ENCODE measurements at regions of chr6 and their contacts with region 1.

Region 1: GRCh38 chr6:125153391-125154117 is at the start of gene TPD52L1:
- DNase-seq: peak; percentile 89 to 93 (median 91)
- ATAC-seq: peak; percentile 94
- H3K4me3 ChIP-seq: peak within 1 kb of the TSS; percentile 59 to 64
- H3K27ac ChIP-seq: peak within 1 kb of the TSS; percentile 63 to 80 (median 72)
- H3K4me1 ChIP-seq: peaks cover 15% of the 10 kb centered on the region
- H3K27me3 ChIP-seq: no peaks in the 10 kb centered on the region
- CTCF ChIP-seq: peak; percentile 79 to 95 (median 91)
- POLR2A ChIP-seq: peak; percentile 66 to 79 (median 72)
- total RNA-seq, gene TPD52L1: 33.3 to 101 TPM

Region 2: GRCh38 chr6:124995131-124995530 is 158.4 kb before region 1 on chr6:
- intact Hi-C with region 1: no loop called
- DNase-seq: no peak
- ATAC-seq: no peak
- H3K4me3 ChIP-seq: no peak overlapping the region
- H3K27ac ChIP-seq: no peak overlapping the region
- H3K4me1 ChIP-seq: peaks cover 14% of the 10 kb centered on the region
- H3K27me3 ChIP-seq: no peaks in the 10 kb centered on the region
- CTCF ChIP-seq: no peak
- POLR2A ChIP-seq: no peak

Region 3: GRCh38 chr6:125273965-125274364 is 120.4 kb after region 1 on chr6:
- intact Hi-C with region 1: no loop called
- DNase-seq: peak in 3 of 4 donors; percentile 19 to 73 (median 28)
- ATAC-seq: peak; percentile 35
- H3K4me3 ChIP-seq: no peak overlapping the region
- H3K27ac ChIP-seq: no peak overlapping the region
- H3K4me1 ChIP-seq: no peaks in the 10 kb centered on the region
- H3K27me3 ChIP-seq: no peaks in the 10 kb centered on the region
- CTCF ChIP-seq: no peak
- POLR2A ChIP-seq: no peak

Region 4: GRCh38 chr6:125301435-125302391 is 148.2 kb after region 1 on chr6 and contains the start of gene HDDC2:
- intact Hi-C with region 1: loop called (anchors 10 kb)
- DNase-seq: peak; percentile 67 to 77 (median 76)
- ATAC-seq: peak; percentile 92
- H3K4me3 ChIP-seq: peak within 1 kb of the TSS; percentile 29 to 36
- H3K27ac ChIP-seq: peak within 1 kb of the TSS; percentile 74 to 89 (median 83)
- H3K4me1 ChIP-seq: peaks cover 12% of the 10 kb centered on the region
- H3K27me3 ChIP-seq: no peaks in the 10 kb centered on the region
- CTCF ChIP-seq: peak in 2 of 7 experiments; percentile 4 to 20
- POLR2A ChIP-seq: peak; percentile 53 to 75 (median 73)
- total RNA-seq, gene HDDC2: 36.8 to 42.5 TPM